Gastrocnemius medialis (tissue), 4 donors: ENCODE measurements at regions of chr3 and their contacts with region 1.

Region 1: GRCh38 chr3:9308298-9308990 is 54.4 kb upstream of the THUMPD3 start:
- DNase-seq: no peak
- ATAC-seq: no peak
- H3K4me3 ChIP-seq: no peak overlapping the region
- H3K27ac ChIP-seq: no peak overlapping the region
- H3K4me1 ChIP-seq: no peaks in the 10 kb centered on the region
- H3K27me3 ChIP-seq: no peaks in the 10 kb centered on the region
- CTCF ChIP-seq: no peak
- POLR2A ChIP-seq: no peak

Region 2: DNA sequence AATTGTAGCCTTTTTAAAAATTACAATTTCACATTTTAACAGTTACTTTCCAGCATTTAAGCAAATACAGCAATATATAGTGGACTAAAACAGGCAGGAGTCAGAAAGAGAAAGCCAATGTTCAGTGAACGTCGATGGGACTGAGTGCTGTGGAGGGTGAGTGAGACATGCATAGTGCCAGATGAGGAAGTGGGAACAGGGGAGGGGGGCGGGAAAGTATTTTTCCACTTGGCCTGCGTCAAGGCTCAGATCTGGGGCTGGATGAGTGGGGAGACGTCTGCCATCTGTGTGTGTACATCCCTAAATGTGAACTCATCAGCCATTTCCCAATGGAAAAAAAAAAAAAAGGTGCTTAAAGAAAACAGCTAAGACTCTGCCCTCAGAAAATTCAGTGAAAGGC is 325.9 kb before region 1 on chr3:
- in situ Hi-C with region 1: loop called in 1 of 4 experiments (anchors 5 kb)
- intact Hi-C with region 1: no loop called
- DNase-seq: no peak
- ATAC-seq: peak in 1 of 2 donors; percentile 27
- H3K4me3 ChIP-seq: no peak overlapping the region
- H3K27ac ChIP-seq: no peak overlapping the region
- H3K4me1 ChIP-seq: no peaks in the 10 kb centered on the region
- H3K27me3 ChIP-seq: peaks cover 0 to 3% (median 0%) of the 10 kb centered on the region in 3 donors
- CTCF ChIP-seq: no peak
- POLR2A ChIP-seq: no peak